Cardiac septum (tissue), 1 donor: ENCODE measurements at regions of chr2 and their contacts with region 1.

Region 1: DNA sequence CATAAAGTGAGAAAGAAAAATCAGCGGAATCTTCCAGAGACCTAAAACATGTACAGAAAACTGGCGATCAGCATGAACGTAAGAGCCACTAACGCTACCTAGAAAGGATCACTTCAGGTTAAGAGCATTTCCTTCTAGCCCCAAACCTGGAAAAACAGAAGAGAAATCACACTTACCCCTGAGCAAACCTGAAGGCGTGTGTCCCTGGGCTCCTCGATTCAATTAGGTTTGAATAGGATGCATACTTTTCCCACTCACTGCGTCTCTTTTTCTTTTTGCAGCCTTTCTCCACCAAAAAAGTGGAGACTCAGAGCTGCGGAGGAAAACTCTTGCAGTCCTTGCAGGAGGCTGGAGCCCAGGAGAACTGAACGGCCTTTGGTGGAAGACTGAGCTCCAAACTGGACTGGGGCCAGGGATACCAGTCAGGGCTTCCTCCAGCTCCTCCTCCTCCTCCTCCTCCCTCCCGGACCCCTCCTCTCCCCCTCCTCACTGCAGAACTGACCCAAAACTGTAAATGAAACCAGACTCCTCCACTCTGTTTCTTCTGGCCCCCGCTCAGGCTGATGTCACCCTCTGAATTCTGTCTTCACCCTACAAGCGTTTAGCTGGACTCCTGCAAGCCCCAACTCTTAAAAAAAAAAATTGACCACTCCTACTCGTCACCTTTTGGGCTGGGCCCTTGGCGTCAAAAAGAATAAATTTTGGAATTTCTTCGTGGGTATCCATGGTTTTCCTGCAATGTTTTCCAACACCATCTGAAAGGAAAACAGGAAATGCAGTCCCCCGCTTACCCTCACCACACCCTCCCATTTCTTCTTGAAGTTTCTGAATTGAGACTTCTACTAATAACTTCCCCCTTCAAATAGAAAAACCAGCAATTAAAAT is at the start of gene COL6A3:
- DNase-seq: peak; percentile 79
- total RNA-seq, gene COL6A3: 89.5 TPM

Region 2: DNA sequence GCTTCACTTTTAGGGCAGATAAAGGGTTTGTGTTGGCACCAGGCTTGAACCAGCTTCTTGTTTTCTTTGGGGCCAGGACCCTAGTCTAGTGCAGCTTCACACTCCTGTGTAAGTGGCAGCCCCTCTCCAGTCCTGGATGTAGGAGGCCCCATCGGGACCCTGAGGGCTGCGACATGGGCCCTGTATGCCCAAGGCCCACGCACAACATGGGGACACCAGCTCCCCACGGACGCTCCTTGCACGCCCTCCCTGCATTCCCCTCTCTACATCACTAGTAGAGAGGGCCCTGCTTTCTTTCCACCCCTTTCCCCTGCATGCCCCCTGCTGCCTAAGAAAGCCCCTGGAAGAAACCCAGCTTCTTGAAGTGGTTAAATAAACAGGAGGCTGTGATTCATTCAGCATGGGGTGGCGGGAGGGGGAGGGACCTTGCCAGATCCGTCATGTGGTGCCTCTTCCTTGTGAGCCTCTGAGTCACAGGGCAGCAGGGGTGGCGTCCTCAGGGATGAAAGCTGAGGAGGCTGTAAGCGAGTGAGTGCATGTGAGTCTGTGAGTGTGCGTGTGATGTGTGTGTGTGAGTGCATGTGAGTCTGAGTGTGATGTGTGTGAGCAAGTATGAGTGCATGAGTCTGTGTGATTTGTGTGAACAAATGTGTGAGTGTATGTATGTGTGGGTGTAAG is 285.9 kb before region 1 on chr2:
- intact Hi-C with region 1: loop called (anchors 5 kb)
- DNase-seq: peak; percentile 89

Region 3: GRCh38 chr2:237154082-237154638 is 259.9 kb before region 1 on chr2:
- intact Hi-C with region 1: loop called (anchors 2 kb)
- DNase-seq: no peak

Region 4: GRCh38 chr2:237165405-237166276 is 248.4 kb before region 1 on chr2:
- intact Hi-C with region 1: loop called (anchors 5 kb)
- DNase-seq: no peak

Region 5: GRCh38 chr2:237278568-237278967 is 135.5 kb before region 1 on chr2:
- intact Hi-C with region 1: no loop called
- DNase-seq: no peak

Region 6: GRCh38 chr2:237488901-237489801 is 75.1 kb after region 1 on chr2:
- intact Hi-C with region 1: no loop called
- DNase-seq: peak; percentile 75

Region 7: GRCh38 chr2:237572021-237572741 is 158.2 kb after region 1 on chr2:
- intact Hi-C with region 1: no loop called
- DNase-seq: peak; percentile 92